Esophagus muscularis mucosa (tissue), 4 donors: ENCODE measurements at regions of chr6 and their contacts with region 1.

Region 1: GRCh38 chr6:44655412-44656342 is 268.2 kb downstream of the CDC5L start:
- DNase-seq: peak; percentile 96
- H3K4me3 ChIP-seq: no peak overlapping the region
- H3K27ac ChIP-seq: no peak overlapping the region
- H3K4me1 ChIP-seq: peaks cover 5 to 24% (median 21%) of the 10 kb centered on the region in 4 donors
- H3K27me3 ChIP-seq: no peaks in the 10 kb centered on the region
- CTCF ChIP-seq: peak; percentile 84 to 99 (median 92)
- EP300 ChIP-seq: peak; percentile 34
- POLR2A ChIP-seq: no peak

Region 2: GRCh38 chr6:44833248-44833647 is 177.6 kb after region 1 on chr6:
- intact Hi-C with region 1: no loop called
- DNase-seq: no peak
- H3K4me3 ChIP-seq: no peak overlapping the region
- H3K27ac ChIP-seq: no peak overlapping the region
- H3K4me1 ChIP-seq: no peaks in the 10 kb centered on the region
- H3K27me3 ChIP-seq: no peaks in the 10 kb centered on the region
- CTCF ChIP-seq: no peak
- EP300 ChIP-seq: no peak
- POLR2A ChIP-seq: no peak

Region 3: DNA sequence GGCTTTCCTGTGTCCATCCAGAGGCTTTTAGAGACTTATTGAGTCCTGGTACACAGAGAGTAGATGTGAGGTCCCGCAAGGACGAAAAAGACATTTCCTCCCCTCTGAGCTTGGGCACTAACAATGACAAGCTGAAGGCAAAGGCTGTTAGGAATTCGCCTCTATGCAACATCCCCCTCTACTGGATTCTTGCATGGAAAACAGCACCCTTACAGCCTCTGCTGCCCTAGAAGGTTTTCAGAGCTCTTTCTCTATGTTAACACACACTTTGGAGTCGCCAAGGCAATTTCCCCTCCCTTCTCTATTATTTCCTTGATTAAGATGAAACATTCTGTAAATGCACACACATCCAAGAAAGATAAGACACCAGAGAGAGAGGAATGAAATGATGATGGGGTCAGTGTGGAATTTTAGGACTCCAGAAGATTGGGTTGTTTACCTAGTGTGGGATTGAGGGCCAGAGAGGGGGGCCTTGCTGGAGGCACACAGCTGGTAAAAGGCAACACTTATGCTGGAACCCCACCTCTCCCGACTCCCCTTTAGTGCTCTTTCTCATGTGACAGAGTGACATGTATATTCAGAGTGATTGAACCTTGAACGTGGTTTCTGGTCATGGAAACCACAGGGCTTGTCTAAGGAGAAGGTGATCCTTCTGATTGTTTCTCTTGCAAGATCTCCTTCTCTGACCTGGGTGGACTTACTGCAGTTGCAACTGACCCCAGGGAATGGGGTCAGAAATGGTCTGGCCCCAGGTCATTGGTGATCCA is 1059.2 kb after region 1 on chr6:
- intact Hi-C with region 1: loop called (anchors 2 kb)
- DNase-seq: no peak
- H3K4me3 ChIP-seq: no peak overlapping the region
- H3K27ac ChIP-seq: no peak overlapping the region
- H3K4me1 ChIP-seq: peaks cover 0 to 9% (median 5%) of the 10 kb centered on the region in 4 donors
- H3K27me3 ChIP-seq: peaks cover 0 to 21% (median 0%) of the 10 kb centered on the region in 4 donors
- CTCF ChIP-seq: peak; percentile 64 to 79 (median 69)
- EP300 ChIP-seq: no peak
- POLR2A ChIP-seq: no peak

Region 4: GRCh38 chr6:45922728-45923351 is 1267.2 kb after region 1 on chr6:
- intact Hi-C with region 1: loop called (anchors 5 kb)
- DNase-seq: no peak
- H3K4me3 ChIP-seq: no peak overlapping the region
- H3K27ac ChIP-seq: no peak overlapping the region
- H3K4me1 ChIP-seq: peaks cover 8 to 23% (median 11%) of the 10 kb centered on the region in 4 donors
- H3K27me3 ChIP-seq: no peaks in the 10 kb centered on the region
- CTCF ChIP-seq: peak; percentile 33 to 46 (median 36)
- EP300 ChIP-seq: no peak
- POLR2A ChIP-seq: no peak